Right ventricle myocardium superior (tissue), 1 donor: ENCODE measurements at regions of chr14 and their contacts with region 1.

Region 1: GRCh38 chr14:104078031-104078455 is 7.5 kb upstream of the ASPG start:
- DNase-seq: peak; percentile 89
- ATAC-seq: peak; percentile 89

Region 2: GRCh38 chr14:103775506-103775905 is 302.5 kb before region 1 on chr14:
- intact Hi-C with region 1: no loop called
- DNase-seq: no peak
- ATAC-seq: peak; percentile 40

Region 3: GRCh38 chr14:104034976-104035699 is 42.9 kb before region 1 on chr14:
- intact Hi-C with region 1: no loop called
- DNase-seq: no peak
- ATAC-seq: no peak

Region 4: GRCh38 chr14:104130974-104131651 is 53.1 kb after region 1 on chr14:
- intact Hi-C with region 1: loop called (anchors 1 kb)
- DNase-seq: peak; percentile 77
- ATAC-seq: peak; percentile 91